ENCODE measurements at regions of chr2 and their contacts with region 1.

Region 1: GRCh38 chr2:42328148-42328833 is 32.7 kb downstream of the COX7A2L start:
- DNase-seq: no peak
- ATAC-seq: no peak

Region 2: DNA sequence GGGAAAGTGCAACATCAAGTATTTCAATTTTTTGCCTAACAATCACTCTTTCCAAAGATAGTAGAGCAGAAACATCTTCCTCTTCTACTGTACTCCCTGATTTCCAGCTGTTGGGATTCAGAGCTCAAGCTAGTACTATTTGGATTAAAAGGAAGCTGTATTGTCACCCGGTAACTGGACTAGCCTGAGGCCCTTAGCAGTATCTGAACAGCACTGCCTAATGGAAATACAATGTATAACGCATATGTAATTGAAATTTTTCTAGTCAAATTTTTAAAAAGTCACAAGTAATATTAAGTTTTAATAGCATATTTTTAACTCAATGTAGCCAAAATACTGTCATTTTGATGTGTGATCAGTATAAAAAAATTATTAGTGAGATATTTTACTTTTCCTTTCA is 53.4 kb before region 1 on chr2:
- intact Hi-C with region 1: loop called (anchors 2 kb)
- DNase-seq: no peak
- ATAC-seq: no peak

Region 3: DNA sequence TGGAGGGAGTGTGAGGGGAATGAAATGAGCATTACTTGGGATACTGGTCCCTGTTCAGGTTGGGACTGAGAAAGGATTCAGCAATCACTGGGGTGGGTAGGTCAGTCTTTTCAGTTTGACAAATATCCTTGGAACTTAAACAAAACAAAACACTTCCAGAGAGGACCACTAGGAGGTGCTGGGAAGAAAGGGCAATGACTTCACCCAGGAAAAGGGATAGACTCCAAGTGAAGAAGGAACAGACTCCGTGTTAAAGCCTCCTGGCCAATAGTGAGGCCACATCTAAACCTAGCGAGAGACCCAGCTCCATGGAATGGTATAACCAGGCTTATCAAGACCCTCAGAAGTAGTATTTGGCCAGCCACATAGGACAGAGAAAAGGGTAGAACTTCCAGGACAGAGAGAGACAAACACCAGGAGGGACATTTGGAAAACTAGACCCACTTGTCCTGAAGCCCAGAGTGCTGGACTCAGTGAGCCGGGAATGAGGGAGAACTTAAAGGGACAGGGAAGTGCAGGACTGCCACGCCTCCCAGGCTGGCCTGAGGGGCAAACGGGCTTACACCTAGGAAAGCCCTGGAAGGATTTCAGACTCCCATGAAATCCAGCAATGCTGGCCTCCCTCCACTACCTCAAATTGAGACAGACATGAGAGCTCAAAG is 185.1 kb after region 1 on chr2:
- intact Hi-C with region 1: no loop called
- DNase-seq: no peak
- ATAC-seq: peak; percentile 33